Vagina (tissue), 2 donors: ENCODE measurements at regions of chr5 and their contacts with region 1.

Region 1: DNA sequence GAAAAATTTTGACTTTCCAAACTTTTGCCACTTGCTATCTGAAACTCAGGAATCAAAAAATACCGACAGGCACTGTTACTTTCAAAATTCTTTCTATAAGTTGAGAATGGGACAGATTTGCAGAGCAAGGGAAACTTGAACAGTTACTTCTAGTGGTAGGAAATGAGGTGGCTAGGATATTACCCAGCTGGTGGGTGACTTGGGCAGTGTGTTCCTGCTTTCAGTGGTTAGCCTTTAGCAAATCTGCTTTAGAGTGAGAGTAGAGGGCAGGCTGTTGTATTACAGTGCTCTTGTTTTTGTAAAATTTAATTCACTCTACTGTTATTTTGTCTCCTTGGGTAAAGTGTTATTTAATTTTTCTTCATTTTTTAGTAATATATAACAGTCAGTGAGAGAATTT is 40.2 kb upstream of the ROPN1L start:
- DNase-seq: no peak
- H3K4me3 ChIP-seq: no peak overlapping the region
- H3K27ac ChIP-seq: no peak overlapping the region
- H3K4me1 ChIP-seq: no peaks in the 10 kb centered on the region
- H3K27me3 ChIP-seq: no peaks in the 10 kb centered on the region
- CTCF ChIP-seq: no peak
- POLR2A ChIP-seq: no peak

Region 2: GRCh38 chr5:10283927-10284635 is 117.4 kb before region 1 on chr5:
- intact Hi-C with region 1: loop called (anchors 10 kb)
- DNase-seq: no peak
- H3K4me3 ChIP-seq: no peak overlapping the region
- H3K27ac ChIP-seq: no peak overlapping the region
- H3K4me1 ChIP-seq: peaks cover 8% of the 10 kb centered on the region
- H3K27me3 ChIP-seq: no peaks in the 10 kb centered on the region
- CTCF ChIP-seq: peak; percentile 65 to 90 (median 84)
- POLR2A ChIP-seq: no peak